ENCODE measurements at regions of chr7 and their contacts with region 1.

Region 1: DNA sequence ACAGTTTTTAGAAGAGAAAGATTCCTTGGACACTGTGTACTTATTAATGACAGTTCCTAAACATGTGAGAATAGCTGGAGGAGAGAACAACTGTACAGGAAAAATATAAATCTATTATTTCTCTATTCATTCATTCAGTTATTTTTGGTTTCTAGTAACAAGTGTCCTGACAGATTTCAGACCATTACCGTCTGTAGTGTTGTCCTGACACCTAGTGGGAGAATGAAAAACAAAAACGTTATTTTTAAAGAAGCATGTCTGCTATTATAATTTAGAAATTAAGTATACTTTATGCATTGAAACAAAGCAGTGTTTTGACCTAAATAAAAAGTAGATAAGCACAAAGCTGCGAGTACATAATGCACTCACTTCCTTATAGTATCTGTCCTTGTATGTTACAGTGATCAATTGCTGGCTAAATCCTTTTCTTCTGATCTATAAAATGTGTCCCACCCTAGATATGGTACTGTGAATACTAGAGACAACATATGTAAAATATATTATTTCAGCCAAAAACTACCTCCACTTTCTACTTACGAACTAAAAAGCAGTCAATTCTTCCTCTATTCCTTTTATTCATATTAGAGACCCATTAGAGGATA is 575.6 kb downstream of the ARL4A start:
- DNase-seq: no peak
- H3K4me3 Mint-ChIP-seq: no peak overlapping the region
- H3K27ac Mint-ChIP-seq: no peak overlapping the region
- H3K4me1 Mint-ChIP-seq: no peaks in the 10 kb centered on the region
- H3K27me3 Mint-ChIP-seq: no peaks in the 10 kb centered on the region

Region 2: DNA sequence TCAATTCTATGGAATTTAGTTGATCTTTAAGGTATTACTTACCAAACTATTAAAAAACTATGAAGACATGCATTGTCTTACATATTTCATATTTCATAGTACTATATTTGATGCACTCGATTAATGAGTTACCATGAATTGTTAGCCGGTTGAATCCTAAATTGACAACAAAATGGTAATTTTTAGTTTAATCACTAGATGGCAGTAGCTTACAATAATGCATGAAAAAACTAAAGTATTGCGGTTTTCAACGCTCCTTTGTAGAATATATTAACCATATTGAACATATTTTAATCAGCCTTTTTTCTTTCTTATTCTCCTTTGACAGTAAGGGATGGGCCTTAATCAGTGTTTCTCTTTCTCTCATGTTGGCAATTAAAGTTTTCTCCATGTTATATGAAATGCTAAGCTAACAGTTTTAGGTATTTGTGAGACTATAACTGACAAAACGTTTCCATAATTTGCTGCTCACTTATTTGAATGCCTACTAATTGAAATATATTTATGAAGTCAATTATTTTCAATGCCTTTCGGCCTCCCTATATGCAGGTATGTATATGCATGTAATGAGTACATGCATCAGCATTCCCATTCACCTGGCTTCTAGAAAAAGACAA is 624.1 kb before region 1 on chr7:
- intact Hi-C with region 1: loop called (anchors 1 kb)
- DNase-seq: no peak
- H3K4me3 Mint-ChIP-seq: no peak overlapping the region
- H3K27ac Mint-ChIP-seq: no peak overlapping the region
- H3K4me1 Mint-ChIP-seq: peaks cover 16% of the 10 kb centered on the region
- H3K27me3 Mint-ChIP-seq: peaks cover 4% of the 10 kb centered on the region

Region 3: GRCh38 chr7:12674849-12675248 is 588.2 kb before region 1 on chr7:
- intact Hi-C with region 1: loop called (anchors 1 kb)
- DNase-seq: peak; percentile 43
- H3K4me3 Mint-ChIP-seq: no peak overlapping the region
- H3K27ac Mint-ChIP-seq: no peak overlapping the region
- H3K4me1 Mint-ChIP-seq: peaks cover 7% of the 10 kb centered on the region
- H3K27me3 Mint-ChIP-seq: peaks cover 4% of the 10 kb centered on the region

Region 4: GRCh38 chr7:13042612-13043240 is 220.3 kb before region 1 on chr7:
- intact Hi-C with region 1: no loop called
- DNase-seq: no peak
- H3K4me3 Mint-ChIP-seq: no peak overlapping the region
- H3K27ac Mint-ChIP-seq: no peak overlapping the region
- H3K4me1 Mint-ChIP-seq: no peaks in the 10 kb centered on the region
- H3K27me3 Mint-ChIP-seq: peaks cover 7% of the 10 kb centered on the region